ENCODE measurements at regions of chr11 and their contacts with region 1.

Region 1: DNA sequence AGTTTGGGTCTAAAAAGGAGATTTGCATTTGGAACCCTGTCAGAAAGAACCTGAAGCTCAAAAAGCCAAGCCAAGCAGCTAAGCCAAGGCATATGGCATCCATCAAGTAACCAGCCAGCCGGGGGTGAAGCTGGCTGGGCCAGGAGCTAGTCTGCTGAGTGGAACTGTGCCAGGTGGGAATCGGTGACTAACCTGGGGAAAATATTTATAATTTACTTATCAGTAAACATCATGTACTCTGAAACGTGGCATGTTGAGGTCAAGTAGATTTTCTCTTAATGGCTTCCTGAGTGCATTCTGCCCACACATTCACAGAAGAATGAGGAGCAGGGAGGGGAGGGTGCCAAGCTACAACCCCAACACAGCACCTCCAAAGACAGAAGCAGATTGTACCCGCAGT is 70.5 kb upstream of the SESN3 start:
- DNase-seq: peak in 6 of 7 donors; percentile 23 to 89 (median 52)
- H3K4me3 ChIP-seq: no peak overlapping the region
- H3K27ac ChIP-seq: no peak overlapping the region
- H3K4me1 ChIP-seq: peaks cover 1 to 20% of the 10 kb centered on the region in 2 donors
- H3K27me3 ChIP-seq: no peaks in the 10 kb centered on the region
- CTCF ChIP-seq: no peak
- POLR2A ChIP-seq: no peak

Region 2: DNA sequence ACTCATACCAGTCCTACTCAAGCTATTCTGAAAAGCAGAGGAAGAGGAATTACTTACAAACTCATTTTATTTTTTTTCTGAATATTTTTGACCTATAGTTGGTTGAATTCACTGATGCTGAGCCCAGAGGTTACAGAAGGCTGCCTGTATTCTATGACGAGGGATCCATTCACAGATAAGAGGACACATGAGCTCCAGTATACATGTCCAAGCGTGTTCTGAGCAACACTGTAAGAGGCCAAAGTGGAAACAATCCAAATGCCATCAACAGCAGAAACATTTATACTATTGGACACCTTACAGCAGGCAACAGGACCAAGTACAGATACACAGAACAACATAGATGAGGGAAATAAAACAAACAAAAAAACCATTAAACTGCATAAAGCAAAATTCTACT is 266.2 kb before region 1 on chr11:
- intact Hi-C with region 1: no loop called
- DNase-seq: no peak
- H3K4me3 ChIP-seq: no peak overlapping the region
- H3K27ac ChIP-seq: no peak overlapping the region
- H3K4me1 ChIP-seq: no peaks in the 10 kb centered on the region
- H3K27me3 ChIP-seq: peaks cover 17% of the 10 kb centered on the region
- CTCF ChIP-seq: no peak
- POLR2A ChIP-seq: no peak

Region 3: GRCh38 chr11:95248666-95249467 is 52.6 kb before region 1 on chr11:
- intact Hi-C with region 1: loop called in 1 of 2 experiments (anchors 10 kb)
- DNase-seq: no peak
- H3K4me3 ChIP-seq: no peak overlapping the region
- H3K27ac ChIP-seq: no peak overlapping the region
- H3K4me1 ChIP-seq: peaks cover 11 to 13% of the 10 kb centered on the region in 2 donors
- H3K27me3 ChIP-seq: no peaks in the 10 kb centered on the region
- CTCF ChIP-seq: no peak
- POLR2A ChIP-seq: no peak

Region 4: DNA sequence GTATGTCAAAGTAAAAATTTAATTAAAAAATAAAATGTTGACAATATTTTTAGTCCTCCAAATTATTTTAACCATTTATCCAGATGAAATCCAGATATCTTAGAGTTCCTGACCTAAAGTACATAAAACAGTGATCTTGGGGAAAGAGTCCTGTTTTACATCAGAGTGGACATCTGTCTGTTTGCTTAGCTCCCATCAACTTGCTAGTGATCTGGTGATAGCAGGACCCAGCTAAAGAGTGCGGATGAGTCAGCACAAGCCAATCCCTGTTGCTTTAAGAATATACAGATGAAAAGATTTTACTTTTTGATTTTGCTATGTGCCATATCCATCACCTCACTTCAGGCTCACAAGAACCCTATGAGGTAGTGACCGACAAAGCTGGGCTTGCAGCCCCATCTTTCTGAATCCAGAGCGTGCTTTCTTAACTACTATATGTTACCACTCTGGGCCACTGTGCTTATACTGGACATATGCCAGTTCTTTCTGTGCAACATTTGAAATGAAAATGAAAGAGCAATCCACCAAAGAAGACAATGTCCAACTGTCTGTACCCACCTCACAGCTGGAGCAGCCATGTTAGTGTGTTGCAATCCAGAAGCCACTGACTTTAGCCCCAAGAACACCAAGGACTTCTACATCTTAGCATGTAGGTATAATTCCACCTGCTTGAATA is 97.1 kb after region 1 on chr11:
- intact Hi-C with region 1: no loop called
- DNase-seq: no peak
- H3K4me3 ChIP-seq: no peak overlapping the region
- H3K27ac ChIP-seq: no peak overlapping the region
- H3K4me1 ChIP-seq: no peaks in the 10 kb centered on the region
- H3K27me3 ChIP-seq: no peaks in the 10 kb centered on the region
- CTCF ChIP-seq: no peak
- POLR2A ChIP-seq: no peak